HepG2 (cell line): ENCODE measurements at regions of chr4 and their contacts with region 1.

Region 1: GRCh38 chr4:52028969-52029368 is 8.8 kb upstream of the LRRC66 start:
- DNase-seq: no peak
- ATAC-seq: no peak
- H3K4me3 ChIP-seq: no peak overlapping the region
- H3K27ac ChIP-seq: no peak overlapping the region
- H3K4me1 ChIP-seq: no peaks in the 10 kb centered on the region
- H3K27me3 ChIP-seq: no peaks in the 10 kb centered on the region
- CTCF ChIP-seq: no peak
- EP300 ChIP-seq: no peak
- POLR2A ChIP-seq: no peak
- RAD21 ChIP-seq: no peak

Region 2: DNA sequence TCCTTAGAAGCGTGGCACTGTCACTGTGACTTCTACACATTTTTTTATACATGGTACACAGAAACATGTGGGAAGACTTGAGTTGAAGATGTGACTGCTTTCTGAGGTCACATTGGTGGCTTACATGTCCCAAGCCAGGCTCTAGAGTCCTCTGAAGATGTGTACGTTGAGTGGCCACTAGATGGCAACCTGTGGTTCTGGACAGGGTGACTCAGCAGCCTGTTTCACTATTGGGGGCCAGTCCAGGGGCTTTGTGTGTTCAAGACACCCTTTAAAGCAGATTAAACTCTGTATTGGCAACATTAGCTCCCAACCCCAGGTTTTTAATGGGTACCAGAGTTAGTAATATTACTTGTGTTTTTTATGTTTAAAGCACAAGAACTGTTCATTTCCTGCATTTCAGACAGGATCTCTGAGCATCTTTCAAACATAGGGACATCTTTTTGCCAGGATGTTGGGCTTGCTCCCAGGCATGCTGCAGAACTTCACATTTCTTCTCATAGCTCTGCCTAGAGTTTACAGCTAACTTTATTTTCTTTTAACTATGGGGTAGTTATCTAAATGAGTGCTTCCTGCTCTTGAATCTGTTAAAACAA is 133.1 kb before region 1 on chr4:
- CTCF ChIA-PET with region 1: interaction called, 14 read pairs
- POLR2A ChIA-PET with region 1: no interaction called
- in situ Hi-C with region 1: no loop called
- intact Hi-C with region 1: no loop called
- DNase-seq: peak; percentile 77
- ATAC-seq: peak; percentile 100
- H3K4me3 ChIP-seq: no peak overlapping the region
- H3K27ac ChIP-seq: peak overlapping the region; percentile 55
- H3K4me1 ChIP-seq: peaks cover 13% of the 10 kb centered on the region
- H3K27me3 ChIP-seq: no peaks in the 10 kb centered on the region
- CTCF ChIP-seq: peak; percentile 87
- EP300 ChIP-seq: no peak
- POLR2A ChIP-seq: no peak
- RAD21 ChIP-seq: peak; percentile 70